ENCODE measurements at regions of chr10 and their contacts with region 1.

Region 1: GRCh38 chr10:126421754-126422394 is 33.6 kb upstream of the ADAM12 start:
- DNase-seq: no peak
- ATAC-seq: no peak
- H3K4me3 ChIP-seq: no peak overlapping the region
- H3K27ac ChIP-seq: no peak overlapping the region
- H3K4me1 ChIP-seq: no peaks in the 10 kb centered on the region
- H3K27me3 ChIP-seq: peaks cover 28% of the 10 kb centered on the region
- CTCF ChIP-seq: no peak
- POLR2A ChIP-seq: no peak
- RAD21 ChIP-seq: no peak

Region 2: DNA sequence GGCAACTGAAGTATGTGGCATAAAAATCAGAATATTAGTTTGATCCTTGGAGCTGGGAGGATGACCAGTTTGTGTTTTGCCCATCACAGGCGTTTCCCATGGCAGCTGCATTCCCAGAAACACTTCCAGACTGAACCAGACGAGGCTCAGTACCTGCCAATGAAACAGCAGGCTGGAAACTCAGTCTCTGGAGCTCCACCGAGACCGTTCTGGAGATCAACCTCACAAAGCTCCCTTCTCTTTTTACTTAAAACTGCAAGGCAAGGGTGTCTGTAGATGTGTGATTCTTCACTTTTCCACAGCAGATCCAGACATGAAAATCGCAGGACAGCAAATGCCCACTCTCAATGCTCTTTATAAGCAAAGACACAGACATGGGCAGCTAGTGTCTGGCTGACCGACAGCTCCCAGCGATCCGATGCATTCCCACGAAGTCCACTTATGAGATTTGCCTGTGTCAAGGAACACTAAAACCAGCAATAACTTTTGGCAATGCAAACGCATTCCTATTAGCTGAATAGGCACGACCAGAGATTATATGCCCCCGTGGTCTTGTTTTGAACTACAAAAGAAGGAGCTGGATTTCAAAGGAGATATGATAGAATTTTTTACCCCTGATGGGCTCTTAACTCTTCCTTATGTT is 106.3 kb before region 1 on chr10:
- CTCF ChIA-PET with region 1: no interaction called
- POLR2A ChIA-PET with region 1: no interaction called
- RAD21 ChIA-PET with region 1: no interaction called
- intact Hi-C with region 1: no loop called
- DNase-seq: no peak
- ATAC-seq: no peak
- H3K4me3 ChIP-seq: no peak overlapping the region
- H3K27ac ChIP-seq: no peak overlapping the region
- H3K4me1 ChIP-seq: no peaks in the 10 kb centered on the region
- H3K27me3 ChIP-seq: peaks cover 49% of the 10 kb centered on the region
- CTCF ChIP-seq: no peak
- POLR2A ChIP-seq: no peak
- RAD21 ChIP-seq: no peak

Region 3: GRCh38 chr10:126400641-126401040 is 21.2 kb before region 1 on chr10:
- CTCF ChIA-PET with region 1: no interaction called
- POLR2A ChIA-PET with region 1: no interaction called
- RAD21 ChIA-PET with region 1: no interaction called
- intact Hi-C with region 1: loop called (anchors 2 kb)
- DNase-seq: no peak
- ATAC-seq: no peak
- H3K4me3 ChIP-seq: no peak overlapping the region
- H3K27ac ChIP-seq: no peak overlapping the region
- H3K4me1 ChIP-seq: peaks cover 0 to 4% of the 10 kb centered on the region in 2 experiments; a peak in 1 of 4 replicates
- H3K27me3 ChIP-seq: peaks cover 51% of the 10 kb centered on the region
- CTCF ChIP-seq: no peak
- POLR2A ChIP-seq: no peak
- RAD21 ChIP-seq: no peak

Measured in HCT116 (cell line).